GM12878 (cell line): ENCODE measurements at regions of chr1 and their contacts with region 1.

Region 1: GRCh38 chr1:205983925-205984725 is 19.1 kb downstream of the RAB7B start:
- DNase-seq: no peak
- ATAC-seq: peak; percentile 98
- H3K4me3 ChIP-seq: no peak overlapping the region
- H3K27ac ChIP-seq: no peak overlapping the region
- H3K4me1 ChIP-seq: no peaks in the 10 kb centered on the region
- H3K27me3 ChIP-seq: no peaks in the 10 kb centered on the region; a peak in 2 of 4 replicates
- CTCF ChIP-seq: peak; percentile 85 to 90 (median 88)
- EP300 ChIP-seq: no peak
- POLR2A ChIP-seq: no peak
- RAD21 ChIP-seq: peak; percentile 90

Region 2: GRCh38 chr1:205919026-205919746 is 64.9 kb before region 1 on chr1:
- CTCF ChIA-PET with region 1: interaction called, 230 read pairs
- POLR2A ChIA-PET with region 1: no interaction called
- RAD21 ChIA-PET with region 1: interaction called, 158 read pairs
- SMC1A ChIA-PET with region 1: interaction called, 110 read pairs
- in situ Hi-C with region 1: no loop called
- intact Hi-C with region 1: no loop called
- DNase-seq: peak; percentile 24
- ATAC-seq: peak; percentile 94
- H3K4me3 ChIP-seq: no peak overlapping the region
- H3K27ac ChIP-seq: no peak overlapping the region
- H3K4me1 ChIP-seq: no peaks in the 10 kb centered on the region; the same call in 1 of the 2 replicates
- H3K27me3 ChIP-seq: peaks cover 2 to 4% of the 10 kb centered on the region in 2 experiments; a peak in 2 of 4 replicates
- CTCF ChIP-seq: peak; percentile 90 to 93 (median 93)
- EP300 ChIP-seq: no peak
- POLR2A ChIP-seq: no peak
- RAD21 ChIP-seq: peak; percentile 91

Region 3: DNA sequence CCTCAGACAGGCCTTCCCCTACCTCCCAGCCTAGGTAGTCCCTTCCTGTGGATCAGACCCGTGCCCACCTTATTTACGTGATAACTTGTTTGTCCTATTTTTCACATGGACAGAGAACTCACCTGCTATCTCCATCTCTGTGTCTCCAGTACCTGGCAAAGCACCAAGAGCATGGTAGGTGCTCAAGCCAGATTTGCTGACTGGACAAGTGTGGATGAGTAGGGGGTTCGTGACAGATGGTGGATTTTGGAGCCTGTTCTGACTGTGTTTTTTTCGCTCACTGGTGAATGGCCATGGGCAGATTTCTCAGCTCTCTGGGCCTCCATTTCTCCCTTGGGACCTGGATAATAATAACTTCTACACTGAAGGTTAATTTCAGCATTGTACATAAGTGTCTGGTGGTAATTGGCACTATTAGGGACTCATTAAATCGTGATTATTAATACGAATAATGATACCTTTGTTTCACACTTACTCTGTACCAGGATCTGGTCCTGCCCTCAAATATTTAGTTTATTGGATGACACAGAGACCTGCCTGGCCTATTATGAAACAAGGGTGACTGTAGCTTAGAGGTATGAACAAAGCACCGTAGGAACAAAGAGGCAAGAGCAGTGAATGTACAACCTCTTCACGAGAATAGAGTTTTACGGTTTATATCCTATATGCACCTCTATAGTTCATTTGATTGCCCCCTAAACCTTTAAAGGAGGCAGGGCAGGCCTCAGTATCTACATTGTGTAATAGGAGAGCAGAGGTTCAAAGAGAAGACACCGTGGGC is 16.4 kb before region 1 on chr1:
- CTCF ChIA-PET with region 1: interaction called, 10 read pairs
- POLR2A ChIA-PET with region 1: no interaction called
- RAD21 ChIA-PET with region 1: no interaction called
- SMC1A ChIA-PET with region 1: interaction called, 3 read pairs
- in situ Hi-C with region 1: no loop called
- intact Hi-C with region 1: no loop called
- DNase-seq: no peak
- ATAC-seq: no peak
- H3K4me3 ChIP-seq: no peak overlapping the region
- H3K27ac ChIP-seq: no peak overlapping the region
- H3K4me1 ChIP-seq: no peaks in the 10 kb centered on the region
- H3K27me3 ChIP-seq: peaks cover 0 to 2% of the 10 kb centered on the region in 2 experiments; a peak in 3 of 4 replicates
- CTCF ChIP-seq: no peak
- EP300 ChIP-seq: no peak
- POLR2A ChIP-seq: no peak
- RAD21 ChIP-seq: no peak

Region 4: GRCh38 chr1:206094024-206094423 is 109.9 kb after region 1 on chr1:
- CTCF ChIA-PET with region 1: interaction called, 6 read pairs
- POLR2A ChIA-PET with region 1: no interaction called
- RAD21 ChIA-PET with region 1: interaction called, 3 read pairs
- SMC1A ChIA-PET with region 1: interaction called, 11 read pairs
- in situ Hi-C with region 1: no loop called
- intact Hi-C with region 1: no loop called
- DNase-seq: no peak
- ATAC-seq: no peak
- H3K4me3 ChIP-seq: no peak overlapping the region
- H3K27ac ChIP-seq: no peak overlapping the region
- H3K4me1 ChIP-seq: no peaks in the 10 kb centered on the region; the same call in 1 of the 2 replicates
- H3K27me3 ChIP-seq: no peaks in the 10 kb centered on the region; a peak in 1 of 4 replicates
- CTCF ChIP-seq: no peak
- EP300 ChIP-seq: no peak
- POLR2A ChIP-seq: no peak
- RAD21 ChIP-seq: no peak